RWPE1 (cell line): ENCODE measurements at regions of chr9 and their contacts with region 1.

Region 1: GRCh38 chr9:127567055-127567729 is 44.9 kb upstream of the STXBP1 start:
- DNase-seq: no peak
- H3K27ac ChIP-seq: peak overlapping the region; percentile 99
- CTCF ChIP-seq: no peak

Region 2: GRCh38 chr9:127503947-127504782 is 63.0 kb before region 1 on chr9:
- CTCF ChIA-PET with region 1: interaction called, 10 read pairs
- POLR2A ChIA-PET with region 1: interaction called, 4 read pairs
- DNase-seq: peak; percentile 67
- H3K27ac ChIP-seq: peak overlapping the region; percentile 93
- CTCF ChIP-seq: peak; percentile 97

Region 3: GRCh38 chr9:127578955-127579853 is 12.0 kb after region 1 on chr9:
- CTCF ChIA-PET with region 1: interaction called, 7 read pairs
- POLR2A ChIA-PET with region 1: interaction called, 15 read pairs
- DNase-seq: peak; percentile 97
- H3K27ac ChIP-seq: peak overlapping the region; percentile 99
- CTCF ChIP-seq: no peak; the same call in 1 of the 2 replicates

Region 4: GRCh38 chr9:127586537-127586936 is 19.3 kb after region 1 on chr9:
- CTCF ChIA-PET with region 1: interaction called, 5 read pairs
- POLR2A ChIA-PET with region 1: interaction called, 11 read pairs
- DNase-seq: peak; percentile 90
- H3K27ac ChIP-seq: peak overlapping the region; percentile 93
- CTCF ChIP-seq: peak; percentile 99